B cell (primary cell): ENCODE measurements at regions of chr6 and their contacts with region 1.

Region 1: DNA sequence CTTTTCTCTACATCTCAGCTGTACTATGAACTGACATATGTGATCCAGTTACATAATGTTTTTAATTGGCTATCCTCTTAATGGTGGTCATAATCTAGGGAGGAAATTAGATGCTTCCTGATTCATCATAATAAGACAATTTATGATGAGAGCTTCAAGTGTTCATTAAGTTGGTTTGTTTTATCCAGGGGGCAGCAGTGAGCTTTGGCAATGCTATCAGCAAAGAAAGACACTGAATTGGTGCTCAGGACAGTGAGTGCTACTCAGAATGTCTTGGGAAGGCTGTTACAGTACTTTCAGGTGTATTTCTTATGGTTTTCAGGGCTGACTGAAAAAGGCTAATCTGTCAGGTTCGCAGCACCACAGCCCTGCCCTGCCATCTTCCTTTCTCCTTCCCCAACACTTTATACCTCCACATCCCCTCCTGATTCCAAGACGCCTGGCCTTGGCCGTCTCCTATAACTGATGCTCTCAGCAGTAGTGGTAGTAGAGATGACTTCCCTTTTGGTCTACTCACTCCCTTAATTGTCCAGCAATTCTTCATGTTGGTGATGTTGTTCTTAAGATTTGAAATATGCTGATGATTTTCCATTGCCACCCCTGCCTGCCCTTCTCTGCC is 67.0 kb upstream of the TNFAIP3 start:
- DNase-seq: peak; percentile 83
- ATAC-seq: peak; percentile 80
- H3K4me3 ChIP-seq: no peak overlapping the region
- H3K4me3 Mint-ChIP-seq: no peak overlapping the region
- H3K27ac ChIP-seq: no peak overlapping the region
- H3K27ac Mint-ChIP-seq: peak overlapping the region; percentile 16
- H3K4me1 ChIP-seq: peaks cover 9% of the 10 kb centered on the region in 2 donors
- H3K4me1 Mint-ChIP-seq: peaks cover 21% of the 10 kb centered on the region
- H3K27me3 ChIP-seq: no peaks in the 10 kb centered on the region
- H3K27me3 Mint-ChIP-seq: no peaks in the 10 kb centered on the region
- CTCF ChIP-seq: peak; percentile 68

Region 2: DNA sequence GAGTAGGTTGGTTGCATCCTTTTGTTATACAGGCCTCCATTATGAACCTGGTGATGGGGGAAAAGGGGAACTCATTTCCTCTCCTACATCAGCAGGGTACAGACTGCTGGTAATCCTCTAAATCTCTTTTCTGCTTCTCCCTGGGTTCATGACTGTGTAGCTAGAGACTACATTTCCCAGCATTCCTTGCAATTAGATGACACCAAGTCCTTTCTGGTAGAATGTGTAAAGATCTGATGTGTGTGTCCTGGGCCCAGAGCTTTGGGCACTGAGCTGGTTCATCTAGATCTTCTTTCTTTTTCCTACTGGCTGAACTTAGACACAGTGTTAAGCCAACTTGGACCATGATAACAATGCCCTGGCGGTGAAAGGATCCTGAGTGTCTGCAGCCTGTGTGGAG is 476.2 kb before region 1 on chr6:
- CTCF ChIA-PET with region 1: no interaction called
- POLR2A ChIA-PET with region 1: no interaction called
- intact Hi-C with region 1: no loop called
- DNase-seq: no peak
- ATAC-seq: peak; percentile 31
- H3K4me3 ChIP-seq: no peak overlapping the region
- H3K4me3 Mint-ChIP-seq: no peak overlapping the region
- H3K27ac ChIP-seq: no peak overlapping the region
- H3K27ac Mint-ChIP-seq: no peak overlapping the region
- H3K4me1 ChIP-seq: no peaks in the 10 kb centered on the region
- H3K4me1 Mint-ChIP-seq: no peaks in the 10 kb centered on the region
- H3K27me3 ChIP-seq: no peaks in the 10 kb centered on the region
- H3K27me3 Mint-ChIP-seq: no peaks in the 10 kb centered on the region
- CTCF ChIP-seq: no peak

Region 3: GRCh38 chr6:137518386-137518983 is 281.6 kb before region 1 on chr6:
- CTCF ChIA-PET with region 1: no interaction called
- POLR2A ChIA-PET with region 1: no interaction called
- intact Hi-C with region 1: no loop called
- DNase-seq: no peak
- ATAC-seq: no peak
- H3K4me3 ChIP-seq: no peak overlapping the region
- H3K4me3 Mint-ChIP-seq: no peak overlapping the region
- H3K27ac ChIP-seq: no peak overlapping the region
- H3K27ac Mint-ChIP-seq: no peak overlapping the region
- H3K4me1 ChIP-seq: peaks cover 0 to 5% of the 10 kb centered on the region in 2 donors
- H3K4me1 Mint-ChIP-seq: peaks cover 2% of the 10 kb centered on the region
- H3K27me3 ChIP-seq: peaks cover 0 to 60% (median 31%) of the 10 kb centered on the region in 4 experiments
- H3K27me3 Mint-ChIP-seq: peaks cover 75% of the 10 kb centered on the region
- CTCF ChIP-seq: no peak

Region 4: GRCh38 chr6:137775720-137776119 is 24.3 kb before region 1 on chr6:
- CTCF ChIA-PET with region 1: no interaction called
- POLR2A ChIA-PET with region 1: no interaction called
- intact Hi-C with region 1: no loop called
- DNase-seq: no peak
- ATAC-seq: no peak
- H3K4me3 ChIP-seq: no peak overlapping the region
- H3K4me3 Mint-ChIP-seq: no peak overlapping the region
- H3K27ac ChIP-seq: no peak overlapping the region
- H3K27ac Mint-ChIP-seq: no peak overlapping the region
- H3K4me1 ChIP-seq: no peaks in the 10 kb centered on the region
- H3K4me1 Mint-ChIP-seq: no peaks in the 10 kb centered on the region
- H3K27me3 ChIP-seq: no peaks in the 10 kb centered on the region
- H3K27me3 Mint-ChIP-seq: no peaks in the 10 kb centered on the region
- CTCF ChIP-seq: no peak

Region 5: DNA sequence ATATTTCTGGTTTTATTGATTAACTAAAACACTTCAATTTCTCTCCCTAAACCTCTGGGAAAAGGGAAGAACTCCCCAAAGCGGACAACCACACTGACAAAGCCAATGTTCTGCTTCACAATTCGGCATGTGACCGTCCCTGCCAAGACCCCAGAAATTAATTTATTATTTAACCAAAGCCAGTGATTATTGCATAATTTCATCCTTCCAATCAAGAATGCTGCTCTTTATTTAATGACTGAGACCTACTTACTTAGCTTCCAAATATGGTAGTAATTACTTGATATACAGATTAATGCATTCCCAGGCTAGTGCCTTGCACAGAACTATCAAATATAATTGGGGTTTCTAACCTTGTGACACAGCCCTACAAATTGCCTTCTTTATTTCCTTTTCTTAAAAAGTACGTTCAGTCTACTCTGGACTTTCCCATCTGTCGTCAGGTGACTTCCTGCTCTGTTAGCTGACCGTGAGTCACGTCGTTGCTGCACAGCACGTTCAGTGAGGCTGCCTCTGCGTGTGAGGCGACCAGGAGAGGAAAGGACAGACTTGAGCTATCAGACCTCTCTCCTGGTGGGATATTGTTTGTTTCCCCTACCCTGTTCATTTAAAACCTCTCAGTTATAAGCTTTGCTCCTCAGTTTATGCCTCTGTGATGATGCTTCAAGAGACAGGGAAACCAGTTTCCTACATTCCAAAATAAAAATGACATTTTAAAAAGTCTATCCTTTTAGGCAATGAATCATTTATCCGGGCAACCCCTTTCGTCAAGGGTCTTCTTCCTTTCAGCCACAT is 11.3 kb after region 1 on chr6:
- CTCF ChIA-PET with region 1: interaction called, 28 read pairs
- POLR2A ChIA-PET with region 1: no interaction called
- intact Hi-C with region 1: no loop called
- DNase-seq: peak; percentile 92
- ATAC-seq: peak; percentile 98
- H3K4me3 ChIP-seq: peak overlapping the region in 4 of 5 experiments; percentile 14 to 54 (median 26)
- H3K4me3 Mint-ChIP-seq: peak overlapping the region; percentile 73
- H3K27ac ChIP-seq: peak overlapping the region; percentile 85 to 91
- H3K27ac Mint-ChIP-seq: peak overlapping the region; percentile 87
- H3K4me1 ChIP-seq: peaks cover 20 to 26% of the 10 kb centered on the region in 2 donors
- H3K4me1 Mint-ChIP-seq: peaks cover 27% of the 10 kb centered on the region
- H3K27me3 ChIP-seq: no peaks in the 10 kb centered on the region
- H3K27me3 Mint-ChIP-seq: no peaks in the 10 kb centered on the region
- CTCF ChIP-seq: no peak

Region 6: GRCh38 chr6:137873273-137873762 is 73.3 kb after region 1 on chr6:
- CTCF ChIA-PET with region 1: interaction called, 31 read pairs
- POLR2A ChIA-PET with region 1: no interaction called
- intact Hi-C with region 1: loop called (anchors 1 kb)
- DNase-seq: peak; percentile 91
- ATAC-seq: peak; percentile 70
- H3K4me3 ChIP-seq: peak overlapping the region in 2 of 5 experiments; percentile 4 to 17
- H3K4me3 Mint-ChIP-seq: peak overlapping the region; percentile 94
- H3K27ac ChIP-seq: peak overlapping the region; percentile 51 to 96
- H3K27ac Mint-ChIP-seq: peak overlapping the region; percentile 80
- H3K4me1 ChIP-seq: peaks cover 58 to 64% of the 10 kb centered on the region in 2 donors
- H3K4me1 Mint-ChIP-seq: peaks cover 70% of the 10 kb centered on the region
- H3K27me3 ChIP-seq: no peaks in the 10 kb centered on the region
- H3K27me3 Mint-ChIP-seq: no peaks in the 10 kb centered on the region
- CTCF ChIP-seq: no peak

Region 7: GRCh38 chr6:137938770-137939379 is 138.8 kb after region 1 on chr6:
- CTCF ChIA-PET with region 1: interaction called, 49 read pairs
- POLR2A ChIA-PET with region 1: no interaction called
- intact Hi-C with region 1: loop called (anchors 1 kb)
- DNase-seq: no peak
- ATAC-seq: no peak
- H3K4me3 ChIP-seq: no peak overlapping the region
- H3K4me3 Mint-ChIP-seq: no peak overlapping the region
- H3K27ac ChIP-seq: no peak overlapping the region
- H3K27ac Mint-ChIP-seq: no peak overlapping the region
- H3K4me1 ChIP-seq: peaks cover 8 to 10% of the 10 kb centered on the region in 2 donors
- H3K4me1 Mint-ChIP-seq: peaks cover 9% of the 10 kb centered on the region
- H3K27me3 ChIP-seq: no peaks in the 10 kb centered on the region
- H3K27me3 Mint-ChIP-seq: no peaks in the 10 kb centered on the region
- CTCF ChIP-seq: no peak

Region 8: GRCh38 chr6:137975188-137975940 is 175.3 kb after region 1 on chr6:
- CTCF ChIA-PET with region 1: interaction called, 10 read pairs
- POLR2A ChIA-PET with region 1: no interaction called
- intact Hi-C with region 1: loop called (anchors 1 kb)
- DNase-seq: peak; percentile 57
- ATAC-seq: no peak
- H3K4me3 ChIP-seq: no peak overlapping the region
- H3K4me3 Mint-ChIP-seq: peak overlapping the region; percentile 3
- H3K27ac ChIP-seq: peak overlapping the region in 1 of 2 donors; percentile 68
- H3K27ac Mint-ChIP-seq: peak overlapping the region; percentile 12
- H3K4me1 ChIP-seq: peaks cover 8 to 17% of the 10 kb centered on the region in 2 donors
- H3K4me1 Mint-ChIP-seq: peaks cover 8% of the 10 kb centered on the region
- H3K27me3 ChIP-seq: no peaks in the 10 kb centered on the region
- H3K27me3 Mint-ChIP-seq: no peaks in the 10 kb centered on the region
- CTCF ChIP-seq: peak; percentile 56

Region 9: GRCh38 chr6:138001750-138002349 is 201.8 kb after region 1 on chr6:
- CTCF ChIA-PET with region 1: interaction called, 13 read pairs
- POLR2A ChIA-PET with region 1: no interaction called
- intact Hi-C with region 1: no loop called
- DNase-seq: peak; percentile 65
- ATAC-seq: peak; percentile 63
- H3K4me3 ChIP-seq: no peak overlapping the region
- H3K4me3 Mint-ChIP-seq: no peak overlapping the region
- H3K27ac ChIP-seq: no peak overlapping the region
- H3K27ac Mint-ChIP-seq: no peak overlapping the region
- H3K4me1 ChIP-seq: no peaks in the 10 kb centered on the region
- H3K4me1 Mint-ChIP-seq: peaks cover 3% of the 10 kb centered on the region
- H3K27me3 ChIP-seq: no peaks in the 10 kb centered on the region
- H3K27me3 Mint-ChIP-seq: peaks cover 11% of the 10 kb centered on the region
- CTCF ChIP-seq: peak; percentile 96

Region 10: GRCh38 chr6:138007014-138007472 is 207.0 kb after region 1 on chr6:
- CTCF ChIA-PET with region 1: interaction called, 13 read pairs
- POLR2A ChIA-PET with region 1: no interaction called
- intact Hi-C with region 1: no loop called
- DNase-seq: peak; percentile 36
- ATAC-seq: no peak
- H3K4me3 ChIP-seq: no peak overlapping the region
- H3K4me3 Mint-ChIP-seq: no peak overlapping the region
- H3K27ac ChIP-seq: no peak overlapping the region
- H3K27ac Mint-ChIP-seq: no peak overlapping the region
- H3K4me1 ChIP-seq: no peaks in the 10 kb centered on the region
- H3K4me1 Mint-ChIP-seq: peaks cover under 1% of the 10 kb centered on the region
- H3K27me3 ChIP-seq: peaks cover 0 to 2% (median 0%) of the 10 kb centered on the region in 4 experiments
- H3K27me3 Mint-ChIP-seq: peaks cover 10% of the 10 kb centered on the region
- CTCF ChIP-seq: peak; percentile 58

Region 11: GRCh38 chr6:138258991-138259390 is 458.9 kb after region 1 on chr6:
- CTCF ChIA-PET with region 1: no interaction called
- POLR2A ChIA-PET with region 1: no interaction called
- intact Hi-C with region 1: no loop called
- DNase-seq: no peak
- ATAC-seq: no peak
- H3K4me3 ChIP-seq: no peak overlapping the region
- H3K4me3 Mint-ChIP-seq: no peak overlapping the region
- H3K27ac ChIP-seq: no peak overlapping the region
- H3K27ac Mint-ChIP-seq: no peak overlapping the region
- H3K4me1 ChIP-seq: no peaks in the 10 kb centered on the region
- H3K4me1 Mint-ChIP-seq: no peaks in the 10 kb centered on the region
- H3K27me3 ChIP-seq: peaks cover 0 to 5% (median 0%) of the 10 kb centered on the region in 4 experiments
- H3K27me3 Mint-ChIP-seq: peaks cover 35% of the 10 kb centered on the region
- CTCF ChIP-seq: no peak